ENCODE measurements at regions of chr1 and their contacts with region 1.

Region 1: GRCh38 chr1:230797942-230798418 is 50.8 kb downstream of the CAPN9 start:
- DNase-seq: peak; percentile 91
- H3K4me3 ChIP-seq: no peak overlapping the region
- H3K27ac ChIP-seq: no peak overlapping the region
- H3K4me1 ChIP-seq: peaks cover 0 to 12% (median 3%) of the 10 kb centered on the region in 4 donors
- H3K27me3 ChIP-seq: peaks cover 0 to 8% (median 0%) of the 10 kb centered on the region in 4 donors
- CTCF ChIP-seq: peak; percentile 75 to 84 (median 79)
- EP300 ChIP-seq: no peak
- POLR2A ChIP-seq: no peak

Region 2: GRCh38 chr1:230693221-230693620 is 104.8 kb before region 1 on chr1:
- intact Hi-C with region 1: no loop called
- DNase-seq: no peak
- H3K4me3 ChIP-seq: no peak overlapping the region
- H3K27ac ChIP-seq: no peak overlapping the region
- H3K4me1 ChIP-seq: peaks cover 0 to 3% (median 0%) of the 10 kb centered on the region in 4 donors
- H3K27me3 ChIP-seq: no peaks in the 10 kb centered on the region
- CTCF ChIP-seq: no peak
- EP300 ChIP-seq: no peak
- POLR2A ChIP-seq: no peak

Region 3: DNA sequence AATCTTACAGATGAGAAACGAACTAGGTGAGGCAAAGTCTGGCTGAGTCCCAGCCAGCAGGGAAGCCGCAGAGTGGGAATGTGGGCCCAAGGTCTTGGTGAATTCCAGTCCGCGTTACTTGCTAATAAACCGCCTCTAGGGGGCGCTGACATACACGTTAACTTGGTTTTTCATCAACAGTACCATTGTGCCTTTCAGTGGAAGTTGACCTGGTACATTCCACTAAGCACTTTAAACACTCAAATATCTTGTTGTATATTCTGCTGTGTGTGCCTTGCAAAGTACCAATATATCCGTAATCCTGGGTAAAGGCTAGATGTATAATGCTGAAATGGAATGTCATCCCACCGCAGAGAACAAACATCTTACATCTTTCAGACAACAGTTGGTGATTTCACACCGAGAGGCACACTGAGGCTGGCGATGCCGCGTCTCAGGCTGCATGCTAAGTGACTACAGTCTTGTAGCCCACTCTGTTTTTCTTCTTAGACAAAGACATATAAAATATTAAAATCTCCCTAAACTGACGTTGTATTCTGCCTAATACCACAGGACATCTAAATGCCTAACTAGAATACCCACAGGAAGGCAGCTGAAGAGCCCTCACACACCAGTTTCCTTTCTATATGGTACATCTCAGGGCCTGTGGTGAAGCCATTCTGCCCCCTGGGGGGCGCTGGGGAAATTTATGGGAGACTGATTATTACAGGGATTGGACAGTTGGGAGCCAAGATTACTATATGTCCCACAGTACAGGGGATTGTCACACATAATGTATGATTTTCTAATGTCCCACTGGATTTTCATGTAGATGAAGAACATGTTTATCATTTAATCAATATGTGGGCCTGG is 119.5 kb after region 1 on chr1:
- intact Hi-C with region 1: loop called (anchors 1 kb)
- DNase-seq: peak; percentile 92
- H3K4me3 ChIP-seq: no peak overlapping the region
- H3K27ac ChIP-seq: no peak overlapping the region
- H3K4me1 ChIP-seq: no peaks in the 10 kb centered on the region
- H3K27me3 ChIP-seq: no peaks in the 10 kb centered on the region
- CTCF ChIP-seq: peak; percentile 55 to 78 (median 63)
- EP300 ChIP-seq: no peak
- POLR2A ChIP-seq: no peak

Region 4: DNA sequence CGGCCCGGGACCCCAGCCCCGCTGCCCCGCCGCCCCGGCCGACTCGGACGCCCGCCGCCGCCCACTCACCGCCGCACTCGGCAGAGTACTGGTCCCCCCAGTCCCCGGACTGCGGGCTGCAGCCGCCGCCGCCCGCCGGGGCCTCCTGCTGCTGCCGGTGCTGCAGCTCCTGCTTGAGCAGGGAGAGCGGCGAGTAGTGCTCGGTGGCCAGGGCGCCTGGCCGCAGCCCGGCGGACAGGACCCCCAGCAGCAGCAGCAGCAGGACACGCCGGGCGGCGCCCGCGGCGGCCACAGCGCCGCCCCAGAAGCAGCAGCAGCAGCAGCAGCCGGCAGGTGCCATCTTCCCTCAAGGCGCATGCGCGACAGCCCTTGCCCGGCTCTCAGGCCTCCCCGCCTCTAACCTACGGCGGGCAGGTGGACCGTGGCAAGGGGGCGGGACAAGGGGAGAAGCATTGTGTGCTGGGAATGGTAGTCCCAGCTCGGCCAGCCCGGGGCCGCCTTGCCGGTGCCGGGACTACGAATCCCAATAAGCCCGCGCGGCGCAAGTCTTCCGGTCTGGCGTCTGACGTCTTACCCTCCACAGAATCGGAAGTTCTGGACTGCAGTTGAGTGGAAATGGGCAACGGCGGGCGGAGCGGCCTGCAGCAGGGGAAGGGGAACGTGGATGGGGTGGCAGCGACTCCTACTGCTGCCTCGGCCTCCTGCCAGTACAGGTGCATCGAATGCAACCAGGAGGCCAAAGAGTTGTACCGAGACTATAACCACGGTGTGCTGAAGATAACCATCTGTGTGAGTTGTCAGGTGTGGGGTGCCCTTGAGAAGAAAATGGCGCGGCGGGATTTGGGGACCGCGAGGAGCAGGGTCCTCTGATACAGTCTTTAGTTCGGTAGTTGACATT is 180.8 kb after region 1 on chr1 and contains the starts of genes ARV1 and TTC13:
- intact Hi-C with region 1: loop called (anchors 5 kb)
- DNase-seq: peak; percentile 99
- H3K4me3 ChIP-seq: peak within 1 kb of the TSS; percentile 88 to 98 (median 91)
- H3K27ac ChIP-seq: peak within 1 kb of the TSS; percentile 70 to 83 (median 77)
- H3K4me1 ChIP-seq: peaks cover 19 to 33% (median 26%) of the 10 kb centered on the region in 4 donors
- H3K27me3 ChIP-seq: no peaks in the 10 kb centered on the region
- CTCF ChIP-seq: peak in 1 of 3 experiments; percentile 24
- EP300 ChIP-seq: no peak
- POLR2A ChIP-seq: peak; percentile 29
- total RNA-seq, gene ARV1: 14.9 to 21.6 (median 18.8) TPM
- total RNA-seq, gene TTC13: 8.4 to 27.0 (median 11.5) TPM

Region 5: GRCh38 chr1:231211005-231211857 is 413.3 kb after region 1 on chr1:
- intact Hi-C with region 1: loop called (anchors 2 kb)
- DNase-seq: no peak
- H3K4me3 ChIP-seq: peak overlapping the region; percentile 35 to 54 (median 48)
- H3K27ac ChIP-seq: no peak overlapping the region
- H3K4me1 ChIP-seq: peaks cover 0 to 8% (median 7%) of the 10 kb centered on the region in 4 donors
- H3K27me3 ChIP-seq: peaks cover 0 to 36% (median 0%) of the 10 kb centered on the region in 4 donors
- CTCF ChIP-seq: peak; percentile 73 to 95 (median 81)
- EP300 ChIP-seq: no peak
- POLR2A ChIP-seq: no peak